Right ventricle myocardium superior (tissue), 1 donor: ENCODE measurements at regions of chr3 and their contacts with region 1.

Region 1: DNA sequence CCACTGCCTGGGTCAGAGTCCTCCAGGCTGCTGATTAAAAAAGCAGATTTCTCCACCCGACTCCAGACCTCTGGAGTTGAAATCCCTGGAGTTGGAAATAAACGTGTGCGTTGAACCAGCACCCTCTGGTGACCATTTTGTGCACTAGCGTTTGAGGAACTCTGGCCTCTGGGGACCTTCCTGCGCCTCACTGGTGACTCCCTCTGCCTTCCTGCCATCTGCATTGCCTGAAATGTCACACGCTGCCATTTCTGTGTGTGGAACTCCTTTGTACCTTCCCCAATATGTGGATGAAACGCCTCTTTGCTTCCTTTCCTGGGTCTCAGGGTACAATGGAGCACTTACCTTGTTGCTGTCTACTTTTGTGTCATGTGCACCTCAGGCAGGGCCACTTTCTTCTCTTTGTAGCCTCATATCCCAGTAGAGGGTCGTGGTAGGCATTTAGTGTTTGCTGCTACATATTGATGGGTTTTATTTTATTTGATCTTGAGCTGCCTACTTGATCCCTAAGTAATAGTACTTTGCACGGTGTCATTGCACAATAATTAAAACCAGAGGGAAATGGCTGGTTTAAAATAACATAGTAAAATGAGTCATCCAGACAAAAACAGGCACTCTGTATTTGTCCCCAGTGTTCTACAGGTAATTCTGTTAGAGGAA is 56.8 kb downstream of the GPR171 start:
- DNase-seq: peak; percentile 66
- ATAC-seq: peak; percentile 98

Region 2: GRCh38 chr3:150480877-150481276 is 665.3 kb before region 1 on chr3:
- intact Hi-C with region 1: no loop called
- DNase-seq: no peak
- ATAC-seq: no peak

Region 3: GRCh38 chr3:150721285-150722130 is 424.7 kb before region 1 on chr3:
- intact Hi-C with region 1: loop called (anchors 5 kb)
- DNase-seq: no peak
- ATAC-seq: peak; percentile 78

Region 4: GRCh38 chr3:150787741-150788370 is 358.3 kb before region 1 on chr3:
- intact Hi-C with region 1: loop called (anchors 2 kb)
- DNase-seq: peak; percentile 92
- ATAC-seq: peak; percentile 92

Region 5: GRCh38 chr3:150925751-150926201 is 220.4 kb before region 1 on chr3:
- intact Hi-C with region 1: loop called (anchors 10 kb)
- DNase-seq: peak; percentile 48
- ATAC-seq: peak; percentile 87